Ovary (tissue), 10 donors: ENCODE measurements at regions of chr1 and their contacts with region 1.

Region 1: DNA sequence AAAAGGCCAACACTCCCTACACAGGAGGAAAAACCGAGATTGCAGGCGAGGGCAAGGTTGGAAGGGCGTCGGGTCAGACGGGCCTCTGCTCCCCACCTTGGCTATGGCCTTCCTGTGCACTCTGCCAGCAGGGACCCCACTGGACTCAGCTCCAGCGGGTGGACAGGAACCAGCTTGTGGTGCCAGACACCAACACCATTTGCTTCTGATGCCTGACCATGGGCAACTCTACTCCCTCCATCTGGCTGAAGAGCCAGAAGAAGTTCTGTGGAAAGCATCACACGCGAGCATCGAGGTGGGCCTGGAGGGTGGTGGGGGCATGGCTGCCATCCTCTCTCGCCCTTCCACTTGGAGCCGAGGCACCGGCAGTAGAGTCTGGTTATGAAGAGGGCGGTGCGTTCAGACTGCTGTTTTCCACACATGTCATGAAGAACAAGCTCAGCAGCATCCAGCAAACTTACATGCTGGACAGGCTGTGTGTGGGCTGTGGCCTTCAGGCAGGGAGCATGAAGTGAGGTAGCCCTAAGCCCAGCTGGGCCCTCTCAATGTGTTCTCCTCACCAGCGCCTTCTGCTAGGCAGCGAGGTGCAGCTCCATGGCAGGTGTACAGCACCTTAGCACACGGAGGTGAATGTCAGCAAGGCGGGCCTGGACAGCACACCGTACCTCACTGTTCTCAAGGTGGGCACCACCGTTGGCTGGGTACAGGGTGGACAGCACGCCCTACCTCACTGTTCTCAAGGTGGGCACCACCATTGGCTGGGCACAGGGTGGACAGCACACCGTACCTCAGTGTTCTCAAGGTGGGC is 15.6 kb upstream of the ZNF669 start:
- DNase-seq: no peak
- H3K4me3 ChIP-seq: no peak overlapping the region
- H3K27ac ChIP-seq: no peak overlapping the region
- H3K4me1 ChIP-seq: no peaks in the 10 kb centered on the region
- H3K27me3 ChIP-seq: no peaks in the 10 kb centered on the region
- CTCF ChIP-seq: no peak
- EP300 ChIP-seq: no peak
- POLR2A ChIP-seq: no peak

Region 2: GRCh38 chr1:246893191-246893939 is 226.4 kb before region 1 on chr1:
- intact Hi-C with region 1: no loop called
- DNase-seq: no peak
- H3K4me3 ChIP-seq: no peak overlapping the region
- H3K27ac ChIP-seq: no peak overlapping the region
- H3K4me1 ChIP-seq: no peaks in the 10 kb centered on the region
- H3K27me3 ChIP-seq: no peaks in the 10 kb centered on the region
- CTCF ChIP-seq: no peak
- EP300 ChIP-seq: no peak
- POLR2A ChIP-seq: no peak

Region 3: DNA sequence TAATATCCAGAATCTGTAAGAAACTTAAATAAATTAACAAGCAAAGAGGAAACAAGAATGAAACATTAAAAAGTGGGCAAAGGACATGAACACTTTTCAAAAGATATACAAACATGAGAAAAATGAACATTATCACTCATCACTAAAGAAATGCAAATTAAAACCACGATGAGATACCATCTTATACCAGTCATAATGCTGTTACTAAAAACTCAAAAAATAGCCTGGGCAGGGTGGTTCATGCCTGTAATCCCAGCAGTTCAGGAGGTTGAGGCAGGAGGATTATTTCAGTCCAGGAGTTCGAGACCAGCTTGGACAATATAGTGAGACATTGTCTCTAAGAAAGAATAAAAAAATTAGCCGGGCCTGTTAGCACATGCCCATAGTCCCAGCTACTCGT is 45.9 kb after region 1 on chr1:
- intact Hi-C with region 1: loop called in 1 of 4 experiments (anchors 5 kb)
- DNase-seq: no peak
- H3K4me3 ChIP-seq: no peak overlapping the region
- H3K27ac ChIP-seq: no peak overlapping the region
- H3K4me1 ChIP-seq: peaks cover 1% of the 10 kb centered on the region
- H3K27me3 ChIP-seq: no peaks in the 10 kb centered on the region
- CTCF ChIP-seq: no peak
- EP300 ChIP-seq: no peak
- POLR2A ChIP-seq: no peak